Caco-2 (cell line): ENCODE measurements at regions of chr1 and their contacts with region 1.

Region 1: GRCh38 chr1:201955009-201955728 is at the start of gene TIMM17A:
- DNase-seq: peak; percentile 96 to 97
- H3K4me3 ChIP-seq: peak within 1 kb of the TSS; percentile 98
- H3K4me3 Mint-ChIP-seq: peak within 1 kb of the TSS; percentile 84
- H3K27ac Mint-ChIP-seq: peak within 1 kb of the TSS; percentile 97
- H3K4me1 ChIP-seq: peaks cover 10% of the 10 kb centered on the region
- H3K4me1 Mint-ChIP-seq: peaks cover 4% of the 10 kb centered on the region
- H3K27me3 ChIP-seq: no peaks in the 10 kb centered on the region
- H3K27me3 Mint-ChIP-seq: no peaks in the 10 kb centered on the region
- CTCF ChIP-seq: no peak
- total RNA-seq, gene TIMM17A: 63.7 and 64.1 TPM in 2 replicates

Region 2: DNA sequence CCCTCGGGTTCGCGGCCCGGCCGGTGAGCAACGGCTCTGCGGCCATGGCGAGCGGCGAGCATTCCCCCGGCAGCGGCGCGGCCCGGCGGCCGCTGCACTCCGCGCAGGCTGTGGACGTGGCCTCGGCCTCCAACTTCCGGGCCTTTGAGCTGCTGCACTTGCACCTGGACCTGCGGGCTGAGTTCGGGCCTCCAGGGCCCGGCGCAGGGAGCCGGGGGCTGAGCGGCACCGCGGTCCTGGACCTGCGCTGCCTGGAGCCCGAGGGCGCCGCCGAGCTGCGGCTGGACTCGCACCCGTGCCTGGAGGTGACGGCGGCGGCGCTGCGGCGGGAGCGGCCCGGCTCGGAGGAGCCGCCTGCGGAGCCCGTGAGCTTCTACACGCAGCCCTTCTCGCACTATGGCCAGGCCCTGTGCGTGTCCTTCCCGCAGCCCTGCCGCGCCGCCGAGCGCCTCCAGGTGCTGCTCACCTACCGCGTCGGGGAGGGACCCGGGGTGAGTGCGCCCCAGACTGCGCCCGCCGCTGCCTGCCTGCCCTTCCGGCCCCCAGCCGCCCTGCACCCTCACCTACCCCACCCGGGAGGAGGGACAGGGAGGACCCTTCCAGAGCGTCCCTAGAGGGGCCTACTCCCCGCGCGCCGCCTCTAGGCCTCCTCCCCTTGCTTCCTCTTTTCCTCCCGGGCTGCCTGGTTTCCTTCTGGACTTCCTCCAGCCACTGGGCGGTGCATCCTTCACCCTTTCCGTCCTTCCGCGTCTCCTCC is 27.6 kb after region 1 on chr1 and contains the start of gene RNPEP:
- CTCF ChIA-PET with region 1: no interaction called
- POLR2A ChIA-PET with region 1: no interaction called
- intact Hi-C with region 1: loop called (anchors 2 kb)
- DNase-seq: peak in 1 of 2 experiments; percentile 75
- H3K4me3 ChIP-seq: peak within 1 kb of the TSS; percentile 68
- H3K4me3 Mint-ChIP-seq: peak within 1 kb of the TSS; percentile 99
- H3K27ac Mint-ChIP-seq: peak within 1 kb of the TSS; percentile 94
- H3K4me1 ChIP-seq: peaks cover 17% of the 10 kb centered on the region
- H3K4me1 Mint-ChIP-seq: peaks cover 27% of the 10 kb centered on the region
- H3K27me3 ChIP-seq: no peaks in the 10 kb centered on the region
- H3K27me3 Mint-ChIP-seq: no peaks in the 10 kb centered on the region
- CTCF ChIP-seq: peak; percentile 14 to 24
- total RNA-seq, gene RNPEP: 75.9 and 83.0 TPM in 2 replicates

Region 3: DNA sequence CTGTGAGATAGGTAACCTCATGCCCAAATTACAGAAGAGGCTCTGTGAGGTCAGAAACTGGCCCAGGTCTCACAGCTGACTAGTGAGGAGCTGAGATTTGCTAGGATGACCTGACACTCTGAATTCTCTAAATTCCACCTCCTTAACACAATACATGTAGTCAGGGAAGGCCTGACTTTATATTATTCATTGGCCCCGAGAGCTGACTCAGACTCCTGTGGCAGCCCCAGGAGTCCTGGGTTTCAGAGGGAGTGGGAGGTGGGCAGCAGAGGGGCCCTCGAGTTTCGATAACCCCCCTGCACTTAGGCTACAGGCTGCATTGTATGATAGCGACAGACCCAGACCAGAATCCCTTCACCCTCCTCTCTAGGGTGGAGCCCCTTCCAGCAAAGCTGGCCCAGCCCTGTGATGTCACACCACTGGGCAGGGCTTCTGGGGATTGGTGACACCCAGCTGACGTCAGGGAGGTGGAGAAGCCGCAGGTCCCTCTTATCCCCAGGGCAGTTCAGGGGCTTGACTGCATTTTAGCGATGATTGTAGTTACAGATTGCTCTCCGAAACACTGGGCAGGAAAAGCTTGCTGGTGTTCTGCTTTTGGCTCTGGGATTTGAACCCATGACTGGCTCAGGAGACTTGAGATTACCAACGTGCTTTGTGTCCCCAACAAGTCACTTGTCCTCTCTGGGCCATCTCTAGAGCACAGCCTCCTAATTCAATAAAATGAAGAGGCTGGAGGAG is 150.5 kb after region 1 on chr1:
- CTCF ChIA-PET with region 1: no interaction called
- POLR2A ChIA-PET with region 1: no interaction called
- intact Hi-C with region 1: no loop called
- DNase-seq: peak; percentile 89 to 92
- H3K4me3 ChIP-seq: no peak overlapping the region
- H3K4me3 Mint-ChIP-seq: peak overlapping the region; percentile 53
- H3K27ac Mint-ChIP-seq: peak overlapping the region; percentile 89
- H3K4me1 ChIP-seq: peaks cover 45% of the 10 kb centered on the region
- H3K4me1 Mint-ChIP-seq: peaks cover 42% of the 10 kb centered on the region
- H3K27me3 ChIP-seq: no peaks in the 10 kb centered on the region
- H3K27me3 Mint-ChIP-seq: no peaks in the 10 kb centered on the region
- CTCF ChIP-seq: no peak